MCF 10A (cell line): ENCODE measurements at regions of chr1 and their contacts with region 1.

Region 1: DNA sequence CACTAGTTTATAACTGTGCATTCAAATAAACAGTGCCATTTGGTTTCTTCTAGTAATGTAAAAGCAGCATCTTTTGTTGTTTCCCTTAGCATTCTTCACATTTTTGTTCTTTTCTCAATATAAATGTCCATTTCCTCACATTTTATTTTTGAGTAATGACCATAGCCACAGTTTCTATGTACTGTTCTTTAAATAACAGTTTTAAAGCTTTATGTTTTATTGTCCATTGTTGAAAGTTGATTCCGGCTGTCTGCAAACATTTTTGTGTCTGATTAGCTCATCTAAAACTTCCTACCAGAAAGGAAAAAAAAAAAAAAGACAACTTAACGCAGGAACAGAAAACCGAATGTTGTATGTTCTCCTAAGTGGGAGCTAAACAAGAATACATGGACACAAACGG is 139.7 kb downstream of the MAGI3 start:
- DNase-seq: no peak
- H3K4me3 Mint-ChIP-seq: no peak overlapping the region
- H3K27ac Mint-ChIP-seq: no peak overlapping the region
- H3K4me1 Mint-ChIP-seq: peaks cover 7% of the 10 kb centered on the region
- H3K27me3 Mint-ChIP-seq: no peaks in the 10 kb centered on the region
- CTCF ChIP-seq: no peak

Region 2: GRCh38 chr1:113542221-113542701 is 12.2 kb after region 1 on chr1:
- CTCF ChIA-PET with region 1: interaction called, 3 read pairs
- POLR2A ChIA-PET with region 1: interaction called, 17 read pairs
- intact Hi-C with region 1: no loop called
- DNase-seq: peak; percentile 87
- H3K4me3 Mint-ChIP-seq: no peak overlapping the region
- H3K27ac Mint-ChIP-seq: peak overlapping the region; percentile 80
- H3K4me1 Mint-ChIP-seq: peaks cover 37% of the 10 kb centered on the region
- H3K27me3 Mint-ChIP-seq: no peaks in the 10 kb centered on the region
- CTCF ChIP-seq: no peak

Region 3: GRCh38 chr1:113949007-113949406 is 419.0 kb after region 1 on chr1:
- CTCF ChIA-PET with region 1: no interaction called
- POLR2A ChIA-PET with region 1: no interaction called
- intact Hi-C with region 1: no loop called
- DNase-seq: no peak
- H3K4me3 Mint-ChIP-seq: no peak overlapping the region
- H3K27ac Mint-ChIP-seq: no peak overlapping the region
- H3K4me1 Mint-ChIP-seq: peaks cover 5% of the 10 kb centered on the region
- H3K27me3 Mint-ChIP-seq: no peaks in the 10 kb centered on the region
- CTCF ChIP-seq: peak; percentile 33